MCF 10A (cell line): ENCODE measurements at regions of chr6 and their contacts with region 1.

Region 1: GRCh38 chr6:39865011-39865888 is 69.0 kb downstream of the MOCS1 start:
- DNase-seq: peak; percentile 73
- H3K4me3 Mint-ChIP-seq: no peak overlapping the region
- H3K27ac Mint-ChIP-seq: no peak overlapping the region
- H3K4me1 Mint-ChIP-seq: no peaks in the 10 kb centered on the region
- H3K27me3 Mint-ChIP-seq: peaks cover 8% of the 10 kb centered on the region
- CTCF ChIP-seq: peak; percentile 62

Region 2: DNA sequence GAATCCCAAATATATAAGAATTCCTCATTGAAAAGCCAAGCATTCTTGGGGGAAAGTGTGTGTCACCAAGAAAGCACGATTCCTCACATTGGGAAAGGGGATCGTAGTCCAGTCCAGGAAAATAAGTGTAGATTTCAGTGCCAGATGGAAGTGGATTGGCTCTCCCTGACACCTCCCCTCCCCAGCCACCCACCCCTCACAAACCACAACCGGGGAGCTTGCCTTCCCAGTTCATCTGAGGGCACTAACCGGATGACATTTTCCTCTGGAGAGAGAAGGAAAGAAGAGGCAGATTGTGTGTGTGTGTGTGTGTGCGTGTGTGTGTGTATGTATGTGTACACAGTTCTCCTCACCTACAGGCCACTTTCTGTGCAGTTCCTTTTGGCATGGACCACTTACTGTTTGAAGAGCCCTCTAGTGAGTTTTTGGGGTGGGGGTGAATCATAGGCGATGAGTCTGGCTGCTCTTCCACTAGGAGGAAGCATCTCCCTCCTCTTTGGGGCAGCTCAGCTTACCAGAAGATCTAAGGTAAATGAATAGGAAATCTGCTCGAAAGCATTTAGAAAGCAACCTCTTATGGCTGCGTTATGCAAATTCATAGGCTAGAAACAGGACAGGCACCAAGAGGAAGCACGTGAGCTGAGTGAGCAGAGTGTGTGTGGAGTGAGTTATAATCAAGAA is 52.3 kb before region 1 on chr6:
- CTCF ChIA-PET with region 1: no interaction called
- POLR2A ChIA-PET with region 1: no interaction called
- intact Hi-C with region 1: no loop called
- DNase-seq: no peak
- H3K4me3 Mint-ChIP-seq: no peak overlapping the region
- H3K27ac Mint-ChIP-seq: no peak overlapping the region
- H3K4me1 Mint-ChIP-seq: no peaks in the 10 kb centered on the region
- H3K27me3 Mint-ChIP-seq: no peaks in the 10 kb centered on the region
- CTCF ChIP-seq: no peak

Region 3: GRCh38 chr6:39850736-39851297 is 14.4 kb before region 1 on chr6:
- CTCF ChIA-PET with region 1: interaction called, 10 read pairs
- POLR2A ChIA-PET with region 1: no interaction called
- intact Hi-C with region 1: no loop called
- DNase-seq: no peak
- H3K4me3 Mint-ChIP-seq: no peak overlapping the region
- H3K27ac Mint-ChIP-seq: no peak overlapping the region
- H3K4me1 Mint-ChIP-seq: no peaks in the 10 kb centered on the region
- H3K27me3 Mint-ChIP-seq: no peaks in the 10 kb centered on the region
- CTCF ChIP-seq: no peak